ENCODE measurements at regions of chr20 and their contacts with region 1.

Region 1: GRCh38 chr20:1336699-1337367 is 7.9 kb upstream of the SDCBP2 start:
- DNase-seq: peak; percentile 92
- H3K4me3 ChIP-seq: no peak overlapping the region
- H3K27ac ChIP-seq: peak overlapping the region; percentile 48 to 70 (median 59)
- H3K4me1 ChIP-seq: peaks cover 23 to 49% (median 27%) of the 10 kb centered on the region in 4 donors
- H3K27me3 ChIP-seq: no peaks in the 10 kb centered on the region
- CTCF ChIP-seq: no peak
- EP300 ChIP-seq: no peak
- POLR2A ChIP-seq: no peak

Region 2: GRCh38 chr20:1370548-1371110 is 33.8 kb after region 1 on chr20:
- intact Hi-C with region 1: loop called (anchors 5 kb)
- DNase-seq: peak; percentile 91
- H3K4me3 ChIP-seq: no peak overlapping the region
- H3K27ac ChIP-seq: peak overlapping the region; percentile 41 to 63 (median 60)
- H3K4me1 ChIP-seq: peaks cover 46 to 63% (median 58%) of the 10 kb centered on the region in 4 donors
- H3K27me3 ChIP-seq: no peaks in the 10 kb centered on the region
- CTCF ChIP-seq: no peak
- EP300 ChIP-seq: no peak
- POLR2A ChIP-seq: no peak

Measured in esophagus muscularis mucosa (tissue), 4 donors.